Colonic mucosa (tissue), 4 donors: ENCODE measurements at regions of chr12 and their contacts with region 1.

Region 1: DNA sequence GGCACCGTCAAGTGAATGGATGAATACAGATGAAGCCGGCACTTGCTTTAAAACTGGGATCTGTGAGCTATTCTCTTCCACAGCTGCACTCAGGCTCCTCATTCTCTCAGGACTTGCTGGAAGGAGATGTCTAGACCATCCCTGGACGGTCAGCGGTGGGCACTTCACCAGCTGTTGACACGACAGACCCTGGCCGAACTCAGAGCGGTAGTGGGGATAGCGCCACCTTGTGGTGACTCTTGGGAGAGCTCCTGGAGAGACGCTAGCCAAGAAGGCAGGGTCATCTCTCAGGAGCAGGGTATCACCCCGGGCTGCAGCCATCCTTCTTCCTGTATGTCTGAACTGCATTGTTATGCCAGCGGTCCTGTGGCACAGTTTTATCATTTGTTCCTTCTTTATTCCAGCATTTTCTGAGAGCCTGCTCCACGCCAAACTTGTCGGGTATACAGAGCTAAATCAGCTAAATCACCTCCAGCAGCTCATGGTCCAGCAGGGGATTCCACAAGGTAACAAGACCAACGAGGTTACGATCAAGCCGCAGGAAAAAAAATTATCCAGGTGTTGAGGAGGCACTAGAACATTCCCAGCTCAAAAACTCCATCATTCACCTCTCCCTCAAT is 10.0 kb downstream of the WNT1 start:
- DNase-seq: peak; percentile 76
- H3K4me3 ChIP-seq: no peak overlapping the region
- H3K27ac ChIP-seq: no peak overlapping the region
- H3K4me1 ChIP-seq: no peaks in the 10 kb centered on the region
- H3K27me3 ChIP-seq: peaks cover 13% of the 10 kb centered on the region
- CTCF ChIP-seq: peak; percentile 84

Region 2: DNA sequence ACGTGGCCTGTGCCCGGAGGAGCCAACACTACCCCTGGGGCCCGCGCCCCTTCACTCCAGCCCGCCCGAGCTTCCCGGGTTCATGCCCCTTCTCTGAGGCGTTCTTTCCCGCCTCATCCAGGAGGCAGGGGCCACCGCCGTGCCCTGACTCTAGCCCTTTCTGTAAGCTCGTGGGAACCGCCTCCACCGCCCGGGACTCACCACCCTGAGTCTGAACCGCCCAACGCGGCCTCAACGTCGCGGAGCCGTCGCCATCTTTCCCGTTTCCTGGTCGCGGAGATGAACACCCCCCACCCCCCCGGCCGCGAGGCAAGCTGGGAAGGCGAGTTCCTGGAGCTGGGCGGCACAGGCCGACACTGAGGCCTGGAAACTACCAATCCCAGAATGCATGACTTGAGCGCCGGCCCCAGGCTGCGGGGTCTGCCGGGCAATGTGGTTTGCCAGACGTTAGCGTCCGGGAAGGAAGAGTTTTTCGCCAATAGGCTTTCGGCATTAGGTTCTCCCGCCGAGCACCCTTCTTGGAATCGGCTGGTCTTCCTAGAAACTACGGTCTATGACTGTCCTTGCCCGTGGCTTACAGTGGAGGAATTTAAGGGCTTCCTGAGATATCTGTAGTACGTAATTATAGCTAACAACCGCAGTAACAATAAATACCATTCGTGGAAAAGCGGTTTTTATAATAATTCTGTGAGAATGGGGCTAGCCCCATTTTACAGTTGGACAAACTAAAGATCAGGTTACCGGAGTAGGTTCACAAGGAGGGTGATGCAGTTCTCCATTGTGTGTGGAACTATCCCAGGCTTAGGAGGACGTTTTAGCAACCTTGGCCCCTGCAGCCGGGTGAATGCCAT is 136.0 kb before region 1 on chr12 and contains the start of gene DDX23:
- intact Hi-C with region 1: loop called (anchors 10 kb)
- DNase-seq: peak; percentile 95
- H3K4me3 ChIP-seq: peak within 1 kb of the TSS; percentile 94
- H3K27ac ChIP-seq: peak within 1 kb of the TSS; percentile 85
- H3K4me1 ChIP-seq: peaks cover 10% of the 10 kb centered on the region
- H3K27me3 ChIP-seq: no peaks in the 10 kb centered on the region
- CTCF ChIP-seq: no peak
- total RNA-seq, gene DDX23: 87.2 to 150 TPM

Region 3: DNA sequence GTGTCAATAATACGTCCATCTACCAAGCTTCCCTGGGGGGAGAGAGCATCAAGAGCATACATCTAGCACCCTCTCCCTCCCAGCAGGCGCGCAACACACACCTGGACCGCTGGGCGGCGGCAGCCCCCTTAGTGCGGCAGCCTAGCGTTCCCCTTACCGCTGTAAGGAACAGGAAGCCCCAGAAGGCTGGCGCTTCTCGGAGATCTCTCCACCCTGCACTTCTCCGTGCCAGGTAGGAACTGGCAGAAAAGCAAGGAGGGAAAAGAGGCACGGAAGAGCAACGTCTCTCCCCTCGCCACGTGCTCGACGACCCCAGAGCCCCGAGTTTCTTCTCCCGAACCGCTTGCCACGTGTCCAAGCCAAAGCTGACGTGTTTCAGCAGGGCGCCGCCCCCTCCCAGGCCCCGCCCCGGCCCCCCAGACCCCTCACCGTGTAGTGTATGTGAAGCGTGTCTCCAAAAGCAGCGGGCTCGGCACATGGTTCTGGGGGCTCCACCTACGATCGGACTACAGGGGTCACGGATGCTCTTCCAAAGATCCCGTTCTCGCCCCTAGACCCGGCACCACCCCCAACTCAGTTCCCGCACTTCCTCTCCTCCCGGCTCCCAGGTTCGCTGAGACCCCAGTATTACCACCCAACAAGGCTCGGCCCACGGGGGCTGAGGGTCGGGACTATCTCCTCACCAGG is 63.4 kb before region 1 on chr12:
- intact Hi-C with region 1: loop called (anchors 5 kb)
- DNase-seq: peak; percentile 61
- H3K4me3 ChIP-seq: peak overlapping the region; percentile 96
- H3K27ac ChIP-seq: peak overlapping the region; percentile 60
- H3K4me1 ChIP-seq: no peaks in the 10 kb centered on the region
- H3K27me3 ChIP-seq: no peaks in the 10 kb centered on the region
- CTCF ChIP-seq: peak; percentile 38

Region 4: GRCh38 chr12:49043856-49044258 is 55.7 kb after region 1 on chr12:
- intact Hi-C with region 1: no loop called
- DNase-seq: peak; percentile 75
- H3K4me3 ChIP-seq: no peak overlapping the region
- H3K27ac ChIP-seq: no peak overlapping the region
- H3K4me1 ChIP-seq: no peaks in the 10 kb centered on the region
- H3K27me3 ChIP-seq: no peaks in the 10 kb centered on the region
- CTCF ChIP-seq: peak; percentile 57

Region 5: DNA sequence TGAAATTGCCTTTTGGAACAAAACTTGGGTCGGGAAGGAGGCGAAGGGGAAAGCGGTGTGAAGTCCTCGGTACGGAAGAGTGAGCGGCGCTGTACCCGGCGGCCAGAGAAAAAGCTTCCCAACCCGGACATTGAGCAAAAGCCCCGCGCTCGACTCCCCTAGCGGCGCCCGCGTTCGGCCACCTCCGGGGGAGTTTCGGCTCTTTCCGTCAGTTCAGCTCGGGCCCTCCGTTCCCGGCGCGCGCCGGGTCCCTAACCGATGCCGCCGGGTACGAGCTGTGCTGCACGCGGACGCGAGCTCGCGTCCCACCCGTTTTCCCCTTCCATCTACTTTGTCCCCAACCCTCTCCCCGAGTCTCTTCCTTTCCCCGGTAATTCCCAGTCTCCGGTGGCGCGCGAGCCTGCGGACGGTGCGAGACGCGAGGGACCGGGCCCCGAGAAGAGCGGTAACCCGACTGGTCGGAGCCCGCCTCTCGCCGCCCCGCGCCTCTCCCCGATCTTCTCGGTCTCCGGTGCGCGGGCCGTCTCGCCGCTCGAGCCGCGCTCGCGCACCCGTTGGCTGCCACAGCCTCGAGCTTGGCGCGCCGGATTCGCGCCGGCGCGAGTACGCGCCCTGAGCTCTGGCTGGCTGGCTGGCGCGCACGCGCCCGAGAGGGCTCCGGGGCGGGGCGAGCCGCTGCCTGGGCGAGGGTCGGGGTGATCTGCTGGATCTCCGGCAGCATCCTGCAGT is 378.7 kb after region 1 on chr12:
- intact Hi-C with region 1: no loop called
- DNase-seq: peak; percentile 90
- H3K4me3 ChIP-seq: peak overlapping the region; percentile 85
- H3K27ac ChIP-seq: peak overlapping the region; percentile 83
- H3K4me1 ChIP-seq: peaks cover 5% of the 10 kb centered on the region
- H3K27me3 ChIP-seq: no peaks in the 10 kb centered on the region
- CTCF ChIP-seq: no peak